H1 (cell line): ENCODE measurements at regions of chr14 and their contacts with region 1.

Region 1: DNA sequence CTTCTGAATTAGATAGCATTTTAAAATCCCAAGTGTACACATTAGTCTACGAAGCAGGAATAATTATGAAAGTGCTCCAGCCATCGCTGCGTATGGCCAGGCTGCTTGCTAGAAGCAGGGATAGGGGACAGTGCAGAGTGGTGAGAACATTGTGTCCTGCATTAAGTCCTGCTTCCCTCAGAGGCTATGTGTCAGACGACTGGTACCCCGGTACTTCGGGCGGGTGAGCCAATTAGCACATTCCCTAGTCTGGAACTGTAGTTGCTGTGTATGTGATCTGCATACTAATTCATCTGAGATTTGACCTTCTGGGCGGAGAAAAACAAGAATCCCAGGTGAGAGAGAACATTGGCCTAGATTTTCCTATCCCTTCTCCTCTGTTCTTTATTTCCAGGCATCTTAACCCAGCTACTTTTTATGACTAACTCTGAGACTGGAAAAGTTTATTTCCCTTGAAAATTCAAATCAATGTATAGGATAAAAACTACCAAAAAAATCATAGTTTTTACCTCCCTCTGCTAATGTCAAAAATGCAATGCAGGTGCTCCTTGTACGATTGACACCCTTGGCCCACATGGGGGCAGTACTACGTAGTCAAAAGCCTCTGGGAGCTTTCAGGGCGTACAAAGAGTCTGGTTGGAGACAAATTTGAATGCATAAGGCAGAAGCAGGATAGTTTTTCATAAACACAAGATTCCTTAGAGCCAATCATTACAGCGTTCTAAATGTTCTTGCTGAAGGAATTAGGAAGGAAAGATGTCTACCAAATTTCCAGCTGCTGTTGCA is 764.3 kb downstream of the NOVA1 start:
- DNase-seq: peak in 1 of 2 experiments; percentile 48
- H3K4me3 ChIP-seq: no peak overlapping the region
- H3K27ac ChIP-seq: no peak overlapping the region
- H3K4me1 ChIP-seq: peaks cover 0 to 2% (median 0%) of the 10 kb centered on the region in 4 experiments; a peak in 1 of 7 replicates
- H3K27me3 ChIP-seq: no peaks in the 10 kb centered on the region
- CTCF ChIP-seq: peak; percentile 56 to 72 (median 70)
- EP300 ChIP-seq: no peak
- POLR2A ChIP-seq: no peak
- RAD21 ChIP-seq: peak; percentile 87 to 92

Region 2: DNA sequence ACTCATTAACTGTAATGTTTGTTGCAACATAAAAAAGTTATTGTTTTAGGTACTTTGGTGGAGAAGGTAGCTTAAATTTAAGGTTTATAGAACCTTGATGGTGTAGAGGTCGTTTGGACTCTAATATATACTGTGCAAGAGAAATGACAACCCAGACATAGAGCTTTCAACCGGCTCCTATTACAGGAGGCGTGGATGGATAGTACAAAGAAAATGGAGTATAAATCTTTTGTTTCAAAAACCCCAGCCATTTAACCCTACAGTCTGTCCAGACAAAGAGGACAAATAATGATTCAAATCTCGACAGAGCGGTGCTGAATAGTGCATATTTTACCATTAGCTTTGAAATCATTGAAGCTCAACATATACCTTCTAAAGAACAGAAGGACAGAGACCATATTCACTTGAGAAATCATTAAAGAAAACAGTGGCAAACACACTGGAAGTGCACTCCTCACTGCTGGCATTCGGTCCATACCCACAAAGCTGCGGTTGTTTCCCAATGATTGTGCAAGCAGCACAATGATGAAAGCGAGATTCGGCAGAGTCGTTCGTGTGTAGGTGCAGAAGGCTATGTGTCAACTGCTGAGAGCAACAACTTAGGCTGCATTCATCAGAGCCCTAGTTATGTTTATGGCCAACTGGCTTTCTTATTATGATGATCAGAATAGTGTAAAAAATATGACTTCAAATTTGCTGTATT is 75.7 kb after region 1 on chr14:
- CTCF ChIA-PET with region 1: no interaction called
- POLR2A ChIA-PET with region 1: no interaction called
- DNase-seq: no peak
- H3K4me3 ChIP-seq: no peak overlapping the region
- H3K27ac ChIP-seq: no peak overlapping the region
- H3K4me1 ChIP-seq: no peaks in the 10 kb centered on the region
- H3K27me3 ChIP-seq: no peaks in the 10 kb centered on the region
- CTCF ChIP-seq: no peak
- EP300 ChIP-seq: no peak
- POLR2A ChIP-seq: no peak
- RAD21 ChIP-seq: no peak

Region 3: GRCh38 chr14:26008290-26008689 is 174.8 kb after region 1 on chr14:
- CTCF ChIA-PET with region 1: interaction called, 20 read pairs
- POLR2A ChIA-PET with region 1: no interaction called
- DNase-seq: peak in 1 of 2 experiments; percentile 15
- H3K4me3 ChIP-seq: no peak overlapping the region
- H3K27ac ChIP-seq: no peak overlapping the region
- H3K4me1 ChIP-seq: no peaks in the 10 kb centered on the region
- H3K27me3 ChIP-seq: no peaks in the 10 kb centered on the region
- CTCF ChIP-seq: peak in 2 of 3 experiments; percentile 65 to 84; a peak in 3 of 4 replicates
- EP300 ChIP-seq: no peak
- POLR2A ChIP-seq: no peak
- RAD21 ChIP-seq: peak; percentile 81 to 84

Region 4: GRCh38 chr14:26323869-26324268 is 490.3 kb after region 1 on chr14:
- CTCF ChIA-PET with region 1: no interaction called
- POLR2A ChIA-PET with region 1: no interaction called
- DNase-seq: no peak
- H3K4me3 ChIP-seq: no peak overlapping the region
- H3K27ac ChIP-seq: no peak overlapping the region
- H3K4me1 ChIP-seq: no peaks in the 10 kb centered on the region
- H3K27me3 ChIP-seq: no peaks in the 10 kb centered on the region
- CTCF ChIP-seq: no peak
- EP300 ChIP-seq: no peak
- POLR2A ChIP-seq: no peak
- RAD21 ChIP-seq: no peak